Aorta (tissue), 5 donors: ENCODE measurements at regions of chr2 and their contacts with region 1.

Region 1: GRCh38 chr2:219308142-219309093 is 783 bp downstream of the PTPRN start:
- DNase-seq: peak in 1 of 2 donors; percentile 91
- ATAC-seq: peak; percentile 80
- H3K4me3 ChIP-seq: no peak overlapping the region
- H3K27ac ChIP-seq: no peak overlapping the region
- H3K4me1 ChIP-seq: no peaks in the 10 kb centered on the region
- H3K27me3 ChIP-seq: no peaks in the 10 kb centered on the region

Region 2: DNA sequence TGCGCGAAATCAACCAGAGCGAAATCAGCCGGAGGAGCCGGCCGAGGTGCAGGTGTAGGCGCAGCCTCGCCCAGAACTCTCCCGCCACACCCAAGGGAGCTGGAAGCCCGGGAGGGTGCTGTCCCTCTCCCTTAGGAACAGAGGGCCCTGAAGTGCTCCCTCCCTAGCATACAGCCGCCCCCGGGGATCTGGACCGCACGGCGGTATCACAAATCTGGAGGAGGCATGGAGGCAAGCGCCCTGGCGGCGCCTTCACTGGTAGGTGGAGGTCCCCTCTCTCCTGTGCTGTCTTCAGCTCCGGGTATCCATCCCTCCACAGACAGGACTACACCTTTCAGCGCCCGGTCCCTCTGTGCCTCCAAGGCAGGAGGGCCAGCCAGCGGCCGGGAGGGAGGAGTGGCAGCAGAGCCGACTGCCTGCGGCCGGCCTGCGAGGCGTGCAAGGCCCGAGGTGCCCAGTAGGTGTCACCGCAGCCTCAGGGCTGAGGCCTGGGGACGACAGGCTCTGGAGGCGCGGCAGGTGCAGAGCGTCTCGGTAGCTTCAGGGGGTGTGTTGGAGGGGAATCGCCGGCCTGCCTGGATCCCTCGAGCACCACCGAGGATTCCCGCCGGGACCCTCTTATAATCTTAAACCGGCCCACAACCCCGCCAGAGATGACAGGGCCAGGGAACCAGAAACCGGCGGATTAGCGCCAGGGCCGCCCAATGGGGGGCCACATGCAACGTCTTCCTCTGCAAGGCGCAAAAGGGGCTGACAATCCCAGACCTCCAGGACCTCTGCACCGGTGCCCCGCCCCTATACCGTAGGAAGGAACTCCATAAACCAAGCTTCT is 250.5 kb before region 1 on chr2:
- intact Hi-C with region 1: loop called (anchors 5 to 10 kb)
- DNase-seq: peak; percentile 81 to 92
- ATAC-seq: peak; percentile 92
- H3K4me3 ChIP-seq: no peak overlapping the region
- H3K27ac ChIP-seq: no peak overlapping the region
- H3K4me1 ChIP-seq: no peaks in the 10 kb centered on the region
- H3K27me3 ChIP-seq: no peaks in the 10 kb centered on the region

Region 3: GRCh38 chr2:219274392-219274921 is 34.0 kb before region 1 on chr2:
- intact Hi-C with region 1: no loop called
- DNase-seq: peak; percentile 65 to 78
- ATAC-seq: no peak
- H3K4me3 ChIP-seq: no peak overlapping the region
- H3K27ac ChIP-seq: peak overlapping the region; percentile 93 to 96
- H3K4me1 ChIP-seq: peaks cover 0 to 4% of the 10 kb centered on the region in 2 donors
- H3K27me3 ChIP-seq: no peaks in the 10 kb centered on the region

Region 4: GRCh38 chr2:219352448-219353023 is 44.1 kb after region 1 on chr2:
- intact Hi-C with region 1: no loop called
- DNase-seq: peak in 1 of 2 donors; percentile 73
- ATAC-seq: peak; percentile 29
- H3K4me3 ChIP-seq: no peak overlapping the region
- H3K27ac ChIP-seq: no peak overlapping the region
- H3K4me1 ChIP-seq: no peaks in the 10 kb centered on the region
- H3K27me3 ChIP-seq: no peaks in the 10 kb centered on the region